ENCODE measurements at regions of chr3 and their contacts with region 1.

Region 1: DNA sequence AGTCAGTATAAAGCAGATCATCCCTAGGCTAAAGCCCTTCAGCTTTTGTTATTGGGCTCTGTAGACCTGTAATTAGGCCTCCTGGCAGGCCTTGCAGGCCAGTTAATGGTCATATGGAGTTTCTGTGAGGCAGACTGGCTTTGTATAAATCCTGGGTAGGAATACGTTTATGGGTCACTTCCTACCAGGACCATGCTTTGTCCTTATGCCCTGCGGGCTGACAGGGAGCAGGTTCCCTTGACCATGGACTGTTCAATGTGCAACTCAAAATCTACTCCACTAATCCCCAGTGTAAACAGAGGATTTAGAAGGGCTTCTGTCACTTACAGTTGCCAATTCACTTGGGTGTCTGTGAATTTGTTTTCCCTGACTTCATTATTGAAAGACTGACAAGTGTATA is 202.7 kb upstream of the MLF1 start:
- DNase-seq: no peak
- H3K4me3 ChIP-seq: no peak overlapping the region
- H3K27ac ChIP-seq: no peak overlapping the region
- H3K4me1 ChIP-seq: no peaks in the 10 kb centered on the region
- CTCF ChIP-seq: no peak

Region 2: DNA sequence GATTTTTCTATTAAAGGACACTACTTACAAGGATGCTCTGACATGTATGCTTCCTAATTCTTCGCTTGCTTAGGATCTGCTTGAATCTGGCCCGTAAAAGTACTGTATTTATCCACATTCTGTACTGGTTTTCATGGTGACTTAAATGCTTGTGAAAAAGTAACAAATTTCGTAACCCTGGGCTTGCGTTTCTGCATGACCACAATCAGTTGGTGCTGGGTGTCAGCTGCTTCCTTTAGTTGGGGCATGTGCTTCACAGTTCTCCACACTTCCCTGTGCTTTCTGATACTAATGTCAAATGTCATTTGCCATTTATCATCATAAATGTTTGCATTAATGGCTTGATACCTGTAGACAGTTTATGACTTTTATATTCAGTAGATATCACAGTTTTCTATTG is 15.7 kb before region 1 on chr3:
- CTCF ChIA-PET with region 1: no interaction called
- POLR2A ChIA-PET with region 1: interaction called, 14 read pairs
- intact Hi-C with region 1: no loop called
- DNase-seq: peak; percentile 59
- H3K4me3 ChIP-seq: no peak overlapping the region
- H3K27ac ChIP-seq: peak overlapping the region; percentile 49
- H3K4me1 ChIP-seq: peaks cover 70% of the 10 kb centered on the region
- CTCF ChIP-seq: no peak

Region 3: DNA sequence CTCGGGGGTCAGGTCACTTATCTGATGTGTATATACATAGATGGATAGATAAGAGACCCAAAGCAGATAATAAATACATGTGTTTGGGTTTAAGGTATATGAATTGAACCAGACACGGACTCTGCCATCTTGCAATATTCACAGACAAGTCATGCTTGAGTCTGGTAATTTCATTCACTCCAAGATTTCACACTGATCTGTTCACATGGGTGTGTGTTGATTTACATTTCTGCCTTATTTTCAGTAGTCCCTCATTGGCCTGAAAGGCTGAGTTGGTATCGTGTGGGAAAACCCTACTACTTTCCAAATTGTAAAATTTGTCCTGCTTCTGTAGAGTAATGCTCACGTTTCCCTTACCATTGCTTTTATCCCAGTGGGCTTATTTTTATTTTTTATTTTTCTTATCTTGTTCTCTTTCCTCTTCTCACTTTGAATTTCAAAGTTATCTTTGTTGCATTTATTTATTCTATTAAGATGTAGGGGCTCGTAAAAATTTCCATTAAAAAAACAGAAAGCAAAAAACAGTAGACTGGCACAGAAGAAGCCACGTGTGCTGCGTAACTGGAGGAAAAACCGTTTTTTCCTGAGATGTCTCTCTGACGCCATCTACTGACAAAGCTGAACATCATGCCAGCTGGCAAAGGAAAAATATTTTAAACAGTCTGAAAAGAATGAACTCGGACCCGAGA is 422.8 kb after region 1 on chr3:
- CTCF ChIA-PET with region 1: no interaction called
- POLR2A ChIA-PET with region 1: no interaction called
- intact Hi-C with region 1: no loop called
- DNase-seq: peak; percentile 78
- H3K4me3 ChIP-seq: peak overlapping the region; percentile 15
- H3K27ac ChIP-seq: no peak overlapping the region
- H3K4me1 ChIP-seq: no peaks in the 10 kb centered on the region
- CTCF ChIP-seq: peak; percentile 94